Activated CD8-positive, alpha-beta T cell treated with anti-CD3 and anti-CD28 coated beads for 36 hours (primary cell): ENCODE measurements at regions of chr9 and their contacts with region 1.

Region 1: DNA sequence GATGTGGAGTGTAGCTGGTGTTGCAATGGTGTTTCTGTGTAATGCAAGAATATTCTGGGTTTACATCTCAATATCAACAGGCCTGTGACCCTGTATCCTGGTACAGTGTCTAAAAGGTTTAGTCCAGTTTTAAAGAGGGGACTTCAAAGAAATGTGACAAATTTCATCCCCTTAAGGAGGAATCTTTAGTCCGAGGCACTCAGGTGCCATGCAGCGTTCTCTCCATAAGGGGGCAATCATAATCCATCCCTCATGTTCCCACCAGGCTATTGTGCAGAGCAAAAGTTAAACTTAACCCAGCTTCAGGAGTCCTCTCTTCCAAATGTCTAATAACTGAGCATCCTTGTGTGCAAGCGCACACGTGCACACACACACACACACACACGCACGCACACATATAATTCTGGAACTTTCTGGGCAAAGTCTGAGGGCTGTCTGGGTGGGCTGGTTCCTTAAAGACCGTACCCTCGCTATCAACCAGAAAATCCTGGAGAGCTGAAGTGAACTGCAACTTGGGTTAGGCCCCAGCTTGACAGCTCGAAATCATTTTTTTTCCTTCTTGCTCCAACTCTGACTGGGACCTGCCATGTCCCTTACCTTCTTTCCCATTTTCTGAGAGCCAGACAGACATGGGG is 46.0 kb downstream of the CRB2 start:
- DNase-seq: peak; percentile 44
- ATAC-seq: peak; percentile 60
- H3K4me3 Mint-ChIP-seq: no peak overlapping the region
- H3K27ac Mint-ChIP-seq: no peak overlapping the region
- H3K4me1 Mint-ChIP-seq: peaks cover 8% of the 10 kb centered on the region
- H3K27me3 Mint-ChIP-seq: no peaks in the 10 kb centered on the region
- CTCF ChIP-seq: peak; percentile 43

Region 2: GRCh38 chr9:123523001-123523400 is 121.0 kb after region 1 on chr9:
- CTCF ChIA-PET with region 1: no interaction called
- POLR2A ChIA-PET with region 1: no interaction called
- intact Hi-C with region 1: loop called (anchors 10 kb)
- DNase-seq: no peak
- ATAC-seq: no peak
- H3K4me3 Mint-ChIP-seq: no peak overlapping the region
- H3K27ac Mint-ChIP-seq: no peak overlapping the region
- H3K4me1 Mint-ChIP-seq: no peaks in the 10 kb centered on the region
- H3K27me3 Mint-ChIP-seq: no peaks in the 10 kb centered on the region
- CTCF ChIP-seq: no peak

Region 3: DNA sequence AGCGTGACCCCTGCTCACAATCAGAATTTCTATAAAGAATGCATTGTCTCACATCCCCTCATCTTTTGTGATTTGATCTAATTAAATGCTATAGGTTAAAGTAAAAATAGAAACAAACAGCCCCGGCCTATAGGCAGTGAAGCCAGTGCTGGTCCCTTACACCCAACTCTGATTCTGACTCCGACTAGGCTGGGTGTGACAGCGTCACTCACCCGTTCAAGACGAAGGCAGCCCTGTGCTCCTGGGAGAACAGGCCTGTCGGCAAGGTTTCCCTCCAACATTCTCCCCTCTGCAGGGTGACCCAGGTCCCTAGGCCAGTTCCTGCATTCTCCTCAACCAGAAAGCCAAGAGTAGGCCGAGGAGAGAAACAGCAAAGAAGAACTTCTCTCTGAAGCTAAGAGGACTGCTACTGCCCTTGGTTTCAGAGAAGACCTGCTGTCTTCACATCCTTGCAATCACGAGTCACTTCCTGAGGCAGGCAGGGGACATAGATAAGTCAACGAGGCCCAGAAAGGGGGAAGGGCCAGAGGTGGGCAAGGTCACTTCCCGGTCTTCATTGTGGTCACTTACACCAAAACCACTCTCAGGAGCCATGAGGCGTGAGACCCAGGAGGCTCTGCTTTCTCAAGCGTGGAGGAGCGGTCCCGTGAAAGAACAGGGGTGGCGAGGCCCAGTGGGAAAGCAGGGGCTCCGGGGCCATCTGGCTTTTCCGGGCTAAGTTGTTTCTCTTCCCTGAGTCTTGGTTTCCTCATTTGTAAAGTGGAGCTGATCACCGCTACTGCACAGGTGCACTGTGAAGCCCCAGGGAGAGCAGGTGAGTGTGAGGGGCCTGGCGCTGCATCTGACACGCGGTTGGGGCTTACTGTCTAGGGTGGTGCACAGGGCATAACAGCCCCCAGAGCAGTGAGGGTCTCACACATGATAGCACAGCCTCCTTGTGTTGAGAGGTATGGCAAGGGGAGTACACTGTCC is 154.8 kb after region 1 on chr9:
- CTCF ChIA-PET with region 1: no interaction called
- POLR2A ChIA-PET with region 1: no interaction called
- intact Hi-C with region 1: no loop called
- DNase-seq: no peak
- ATAC-seq: no peak
- H3K4me3 Mint-ChIP-seq: no peak overlapping the region
- H3K27ac Mint-ChIP-seq: no peak overlapping the region
- H3K4me1 Mint-ChIP-seq: peaks cover 4% of the 10 kb centered on the region
- H3K27me3 Mint-ChIP-seq: no peaks in the 10 kb centered on the region
- CTCF ChIP-seq: no peak